ENCODE measurements at regions of chr10 and their contacts with region 1.

Region 1: DNA sequence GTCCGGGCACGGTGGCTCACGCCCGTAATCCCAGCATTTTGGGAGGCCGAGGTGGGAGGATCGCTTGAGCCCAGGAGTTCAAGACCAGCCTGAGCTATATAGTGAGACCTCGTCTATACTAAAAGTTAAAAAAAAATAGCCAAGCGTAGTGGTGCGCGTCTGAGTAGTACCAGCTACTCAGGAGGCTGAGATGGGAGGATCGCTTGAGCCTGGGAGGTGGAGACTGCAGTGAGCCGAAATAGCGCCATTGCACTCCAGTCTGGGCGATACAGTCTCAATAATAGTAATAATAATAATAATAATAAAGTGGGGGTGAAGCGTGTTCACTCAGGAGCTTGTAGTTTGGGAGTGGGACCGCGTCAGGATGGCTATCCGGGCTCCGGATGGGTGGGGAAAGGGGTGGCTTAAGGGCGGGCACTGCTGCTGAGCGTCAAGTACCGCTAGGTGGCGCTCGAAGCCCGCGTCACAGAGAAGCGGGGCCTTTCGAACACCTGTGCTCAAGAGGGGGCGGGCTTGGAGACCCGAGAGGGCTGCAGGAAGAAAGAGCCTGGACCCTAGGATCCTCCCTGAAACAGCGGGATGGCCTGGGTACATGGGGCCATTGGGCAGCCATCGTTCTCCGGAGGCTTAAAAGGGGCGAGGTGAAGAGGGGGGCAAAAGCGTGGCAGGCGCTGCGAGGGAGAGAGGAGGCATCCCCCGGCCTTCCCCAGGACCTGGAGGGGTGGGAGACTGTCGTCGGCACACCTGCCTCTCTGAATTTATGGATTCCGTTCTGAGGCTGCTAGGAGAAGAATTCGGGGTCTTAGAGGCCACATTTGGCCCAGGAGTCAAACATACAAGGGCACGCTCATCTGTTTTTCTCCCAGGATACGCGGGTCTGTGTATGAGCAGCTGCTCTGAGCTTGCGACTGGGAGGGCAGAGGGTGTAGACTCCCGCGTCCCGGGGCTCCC is 14.5 kb downstream of the LBX1 start:
- DNase-seq: no peak
- ATAC-seq: peak; percentile 94
- H3K4me3 ChIP-seq: no peak overlapping the region
- H3K27ac ChIP-seq: no peak overlapping the region
- H3K4me1 ChIP-seq: no peaks in the 10 kb centered on the region; the same call in 1 of the 2 replicates
- H3K27me3 ChIP-seq: peaks cover 15 to 22% of the 10 kb centered on the region in 2 experiments
- CTCF ChIP-seq: peak; percentile 76 to 91 (median 78)
- EP300 ChIP-seq: no peak
- POLR2A ChIP-seq: no peak
- RAD21 ChIP-seq: peak; percentile 71

Region 2: DNA sequence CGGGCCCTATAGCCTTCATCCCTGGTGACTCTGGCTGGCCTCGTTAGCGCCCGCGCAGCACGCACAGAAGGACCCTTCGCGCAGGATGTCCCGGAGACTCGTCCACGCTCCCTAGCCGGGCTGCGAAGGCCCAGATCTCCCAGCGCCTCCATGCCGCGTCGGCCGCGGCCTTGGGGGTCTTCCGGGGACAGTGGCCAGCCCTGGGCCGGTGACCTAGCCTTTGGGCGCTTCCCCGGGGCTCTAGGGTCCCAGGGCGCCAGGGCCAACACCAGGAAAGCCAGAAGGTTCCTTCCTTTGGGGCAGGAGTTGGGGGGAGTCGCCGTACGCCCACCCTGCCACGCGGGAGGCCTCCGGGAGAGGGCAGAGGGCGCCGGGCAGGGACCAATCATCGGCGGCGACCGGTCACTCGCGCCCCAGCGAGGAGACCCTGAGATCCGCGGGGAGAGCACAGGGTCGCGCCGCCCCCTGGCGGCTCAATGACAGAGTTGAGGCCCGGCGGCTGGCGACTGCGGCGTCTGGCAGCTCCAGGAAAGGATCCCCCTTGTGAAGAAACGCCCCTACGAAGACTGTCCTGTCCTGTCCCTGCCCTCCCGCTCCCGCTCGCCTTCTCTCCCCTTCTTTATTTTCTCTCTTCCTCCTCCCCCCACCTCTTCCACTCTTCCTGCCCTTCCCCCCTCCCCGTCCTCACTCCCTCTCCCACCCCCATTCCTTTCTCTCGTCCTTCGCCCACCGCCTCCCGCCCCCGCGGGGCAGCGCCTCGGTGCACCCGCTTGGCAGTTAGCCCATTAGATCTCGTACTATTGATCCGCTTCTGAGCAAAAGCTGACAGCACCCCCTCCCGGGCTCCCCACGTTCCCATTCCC is 76.8 kb after region 1 on chr10:
- CTCF ChIA-PET with region 1: interaction called, 7 read pairs
- POLR2A ChIA-PET with region 1: no interaction called
- RAD21 ChIA-PET with region 1: no interaction called
- SMC1A ChIA-PET with region 1: no interaction called
- in situ Hi-C with region 1: no loop called
- intact Hi-C with region 1: loop called (anchors 2 kb)
- DNase-seq: no peak
- ATAC-seq: peak; percentile 90
- H3K4me3 ChIP-seq: peak overlapping the region; percentile 46; the same call in 1 of the 2 replicates
- H3K27ac ChIP-seq: no peak overlapping the region
- H3K4me1 ChIP-seq: no peaks in the 10 kb centered on the region
- H3K27me3 ChIP-seq: peaks cover 10 to 19% of the 10 kb centered on the region in 2 experiments
- CTCF ChIP-seq: peak; percentile 50 to 65 (median 51)
- EP300 ChIP-seq: no peak
- POLR2A ChIP-seq: no peak
- RAD21 ChIP-seq: peak; percentile 42

Region 3: GRCh38 chr10:101453791-101454718 is 239.3 kb after region 1 on chr10:
- CTCF ChIA-PET with region 1: interaction called, 11 read pairs
- POLR2A ChIA-PET with region 1: no interaction called
- RAD21 ChIA-PET with region 1: no interaction called
- SMC1A ChIA-PET with region 1: interaction called, 3 read pairs
- in situ Hi-C with region 1: no loop called
- intact Hi-C with region 1: no loop called
- DNase-seq: no peak
- ATAC-seq: peak; percentile 40
- H3K4me3 ChIP-seq: no peak overlapping the region
- H3K27ac ChIP-seq: no peak overlapping the region
- H3K4me1 ChIP-seq: no peaks in the 10 kb centered on the region
- H3K27me3 ChIP-seq: no peaks in the 10 kb centered on the region
- CTCF ChIP-seq: no peak
- EP300 ChIP-seq: no peak
- POLR2A ChIP-seq: no peak
- RAD21 ChIP-seq: no peak

Region 4: GRCh38 chr10:101569838-101570766 is 355.4 kb after region 1 on chr10:
- CTCF ChIA-PET with region 1: interaction called, 38 read pairs
- POLR2A ChIA-PET with region 1: no interaction called
- RAD21 ChIA-PET with region 1: interaction called, 15 read pairs
- SMC1A ChIA-PET with region 1: interaction called, 14 read pairs
- in situ Hi-C with region 1: loop called (anchors 5 kb)
- intact Hi-C with region 1: loop called (anchors 2 kb)
- DNase-seq: peak; percentile 19
- ATAC-seq: peak; percentile 92
- H3K4me3 ChIP-seq: peak overlapping the region; percentile 78
- H3K27ac ChIP-seq: no peak overlapping the region
- H3K4me1 ChIP-seq: peaks cover 5% of the 10 kb centered on the region; the same call in 1 of the 2 replicates
- H3K27me3 ChIP-seq: peaks cover 0 to 4% of the 10 kb centered on the region in 2 experiments; a peak in 1 of 4 replicates
- CTCF ChIP-seq: peak; percentile 47 to 88 (median 81)
- EP300 ChIP-seq: no peak
- POLR2A ChIP-seq: no peak; the same call in none of the 2 replicates
- RAD21 ChIP-seq: peak; percentile 78

Region 5: DNA sequence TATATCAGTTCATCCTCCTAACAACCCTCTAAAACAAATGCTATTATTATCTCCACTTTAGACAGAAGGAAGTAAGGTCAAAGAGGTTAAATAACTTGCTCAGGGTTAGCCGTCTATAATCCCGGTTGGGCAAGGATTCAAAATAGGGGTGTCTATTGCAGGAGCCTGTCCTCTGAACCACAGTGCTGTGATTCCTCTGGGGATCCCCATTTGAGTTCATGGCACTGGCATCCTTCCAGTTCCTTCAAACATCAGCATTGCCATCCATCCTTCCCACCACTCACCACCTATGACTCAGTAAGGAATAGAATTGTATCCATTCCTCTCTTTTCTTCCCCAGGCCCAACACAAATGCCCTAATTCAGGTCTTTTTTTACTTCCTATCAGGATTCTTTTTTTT is 876.1 kb after region 1 on chr10:
- CTCF ChIA-PET with region 1: no interaction called
- POLR2A ChIA-PET with region 1: no interaction called
- RAD21 ChIA-PET with region 1: no interaction called
- SMC1A ChIA-PET with region 1: no interaction called
- in situ Hi-C with region 1: loop called (anchors 25 kb)
- intact Hi-C with region 1: no loop called
- DNase-seq: no peak
- ATAC-seq: no peak
- H3K4me3 ChIP-seq: no peak overlapping the region
- H3K27ac ChIP-seq: no peak overlapping the region
- H3K4me1 ChIP-seq: no peaks in the 10 kb centered on the region
- H3K27me3 ChIP-seq: no peaks in the 10 kb centered on the region
- CTCF ChIP-seq: no peak
- EP300 ChIP-seq: no peak
- POLR2A ChIP-seq: no peak
- RAD21 ChIP-seq: no peak